PC-3 (cell line): ENCODE measurements at regions of chr17 and their contacts with region 1.

Region 1: DNA sequence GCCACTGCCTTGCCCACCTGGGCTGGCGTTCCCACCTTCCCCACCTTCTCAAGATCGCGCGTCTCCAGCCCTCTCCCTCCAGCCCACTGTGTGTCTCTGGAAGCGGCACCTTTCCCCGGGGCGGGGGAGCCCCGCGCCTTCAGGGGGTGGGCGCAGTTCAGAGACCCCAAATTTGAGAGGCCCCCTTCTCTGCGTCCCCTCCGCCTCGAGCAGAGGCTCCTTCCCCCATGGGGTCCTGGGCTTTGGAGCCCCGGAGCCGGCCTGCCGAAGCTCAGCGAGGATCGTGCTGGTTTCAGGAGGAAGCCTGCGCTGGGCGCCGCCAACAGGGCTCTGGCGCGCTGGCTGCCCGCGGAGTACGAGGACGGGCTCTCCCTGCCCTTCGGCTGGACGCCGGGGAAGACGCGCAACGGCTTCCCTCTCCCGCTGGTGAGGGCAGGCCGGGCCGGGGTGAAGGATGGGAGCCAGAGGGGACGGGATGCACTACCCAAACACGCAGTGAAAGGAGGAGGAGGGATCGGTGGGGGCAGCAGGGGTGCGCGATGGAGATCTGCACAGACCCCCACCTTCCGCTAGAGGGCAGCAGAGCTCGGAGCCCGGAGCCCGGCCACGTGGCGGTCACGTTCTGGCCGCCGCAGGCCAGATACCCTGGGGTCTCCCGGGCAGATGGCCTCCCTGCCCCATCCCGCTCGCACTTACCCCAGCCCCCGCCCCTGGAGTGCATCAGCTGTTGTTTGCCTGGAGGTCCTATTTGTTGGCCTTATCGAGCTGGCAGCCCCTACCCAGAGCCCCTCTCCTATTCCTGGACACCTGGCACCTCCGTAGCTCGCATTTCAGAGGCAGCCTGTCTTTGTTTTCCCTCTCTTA is 11.1 kb downstream of the LPO start:
- DNase-seq: peak; percentile 58
- ATAC-seq: peak; percentile 81
- H3K4me3 ChIP-seq: peak overlapping the region; percentile 44
- H3K27ac ChIP-seq: no peak overlapping the region
- H3K4me1 ChIP-seq: peaks cover 5% of the 10 kb centered on the region; the same call in 1 of the 2 replicates
- H3K27me3 ChIP-seq: peaks cover 30% of the 10 kb centered on the region
- CTCF ChIP-seq: peak; percentile 94

Region 2: GRCh38 chr17:58176200-58176599 is 73.3 kb before region 1 on chr17:
- CTCF ChIA-PET with region 1: no interaction called
- POLR2A ChIA-PET with region 1: no interaction called
- intact Hi-C with region 1: no loop called
- DNase-seq: peak; percentile 31
- ATAC-seq: no peak
- H3K4me3 ChIP-seq: no peak overlapping the region
- H3K27ac ChIP-seq: no peak overlapping the region
- H3K4me1 ChIP-seq: no peaks in the 10 kb centered on the region
- H3K27me3 ChIP-seq: peaks cover 18% of the 10 kb centered on the region
- CTCF ChIP-seq: no peak

Region 3: GRCh38 chr17:58224315-58224714 is 25.2 kb before region 1 on chr17:
- CTCF ChIA-PET with region 1: no interaction called
- POLR2A ChIA-PET with region 1: no interaction called
- intact Hi-C with region 1: loop called (anchors 2 kb)
- DNase-seq: peak; percentile 92
- ATAC-seq: peak; percentile 96
- H3K4me3 ChIP-seq: peak overlapping the region; percentile 2; the same call in 1 of the 2 replicates
- H3K27ac ChIP-seq: peak overlapping the region; percentile 48
- H3K4me1 ChIP-seq: peaks cover 31% of the 10 kb centered on the region
- H3K27me3 ChIP-seq: 0 out of 2 replicates have a peak, but pooled peaks cover 2% of the 10 kb centered on the region
- CTCF ChIP-seq: no peak